HAP-1 (cell line): ENCODE measurements at regions of chr11 and their contacts with region 1.

Region 1: DNA sequence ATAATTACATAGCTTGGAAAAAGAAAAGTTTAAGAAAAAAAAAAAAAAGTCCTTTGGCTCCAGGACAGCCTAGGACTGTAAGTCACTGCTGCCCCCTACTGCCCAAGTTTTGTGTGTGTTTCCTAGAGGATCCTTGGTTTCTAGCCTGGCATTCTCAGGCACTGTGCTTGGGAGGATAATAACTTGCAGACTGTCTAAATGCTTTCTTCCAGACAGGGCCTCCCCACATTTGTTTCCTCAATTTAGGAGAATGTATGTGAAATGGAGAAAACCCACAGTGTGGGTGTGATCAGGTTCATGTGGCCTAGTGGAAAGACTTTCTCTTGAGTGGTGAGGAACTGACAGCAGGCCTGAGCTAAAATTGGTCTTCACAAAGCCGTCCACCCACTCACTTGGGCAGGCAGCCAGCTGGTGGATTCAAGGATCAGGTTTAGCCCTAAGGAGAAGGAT is 191.0 kb downstream of the NAV2 start:
- DNase-seq: peak; percentile 53 to 84
- H3K4me3 ChIP-seq: no peak overlapping the region
- H3K4me1 ChIP-seq: no peaks in the 10 kb centered on the region
- H3K27me3 ChIP-seq: peaks cover 9% of the 10 kb centered on the region

Region 2: GRCh38 chr11:19311308-19312030 is 592.2 kb before region 1 on chr11:
- in situ Hi-C with region 1: loop called (anchors 25 kb)
- DNase-seq: peak; percentile 29 to 85
- H3K4me3 ChIP-seq: no peak overlapping the region
- H3K4me1 ChIP-seq: no peaks in the 10 kb centered on the region
- H3K27me3 ChIP-seq: peaks cover 9% of the 10 kb centered on the region

Region 3: GRCh38 chr11:19561011-19561410 is 342.6 kb before region 1 on chr11:
- in situ Hi-C with region 1: loop called (anchors 5 kb)
- DNase-seq: no peak
- H3K4me3 ChIP-seq: no peak overlapping the region
- H3K4me1 ChIP-seq: no peaks in the 10 kb centered on the region
- H3K27me3 ChIP-seq: peaks cover 23% of the 10 kb centered on the region

Region 4: GRCh38 chr11:19595840-19596751 is 307.5 kb before region 1 on chr11:
- in situ Hi-C with region 1: no loop called
- DNase-seq: no peak
- H3K4me3 ChIP-seq: no peak overlapping the region
- H3K4me1 ChIP-seq: no peaks in the 10 kb centered on the region
- H3K27me3 ChIP-seq: no peaks in the 10 kb centered on the region